ENCODE measurements at regions of chr2 and their contacts with region 1.

Region 1: GRCh38 chr2:12931186-12931844 is 214.6 kb downstream of the TRIB2 start:
- DNase-seq: no peak
- ATAC-seq: peak; percentile 66 to 76
- H3K4me3 ChIP-seq: no peak overlapping the region
- H3K27ac ChIP-seq: no peak overlapping the region
- H3K4me1 ChIP-seq: peaks cover 0 to 4% of the 10 kb centered on the region in 2 donors
- H3K27me3 ChIP-seq: no peaks in the 10 kb centered on the region
- CTCF ChIP-seq: peak; percentile 62 to 88 (median 73)
- POLR2A ChIP-seq: no peak

Region 2: GRCh38 chr2:12897181-12897580 is 34.1 kb before region 1 on chr2:
- in situ Hi-C with region 1: no loop called
- intact Hi-C with region 1: no loop called
- DNase-seq: no peak
- ATAC-seq: no peak
- H3K4me3 ChIP-seq: no peak overlapping the region
- H3K27ac ChIP-seq: peak overlapping the region in 3 of 4 donors; percentile 6 to 30 (median 24)
- H3K4me1 ChIP-seq: no peaks in the 10 kb centered on the region
- H3K27me3 ChIP-seq: no peaks in the 10 kb centered on the region
- CTCF ChIP-seq: no peak
- POLR2A ChIP-seq: no peak

Region 3: DNA sequence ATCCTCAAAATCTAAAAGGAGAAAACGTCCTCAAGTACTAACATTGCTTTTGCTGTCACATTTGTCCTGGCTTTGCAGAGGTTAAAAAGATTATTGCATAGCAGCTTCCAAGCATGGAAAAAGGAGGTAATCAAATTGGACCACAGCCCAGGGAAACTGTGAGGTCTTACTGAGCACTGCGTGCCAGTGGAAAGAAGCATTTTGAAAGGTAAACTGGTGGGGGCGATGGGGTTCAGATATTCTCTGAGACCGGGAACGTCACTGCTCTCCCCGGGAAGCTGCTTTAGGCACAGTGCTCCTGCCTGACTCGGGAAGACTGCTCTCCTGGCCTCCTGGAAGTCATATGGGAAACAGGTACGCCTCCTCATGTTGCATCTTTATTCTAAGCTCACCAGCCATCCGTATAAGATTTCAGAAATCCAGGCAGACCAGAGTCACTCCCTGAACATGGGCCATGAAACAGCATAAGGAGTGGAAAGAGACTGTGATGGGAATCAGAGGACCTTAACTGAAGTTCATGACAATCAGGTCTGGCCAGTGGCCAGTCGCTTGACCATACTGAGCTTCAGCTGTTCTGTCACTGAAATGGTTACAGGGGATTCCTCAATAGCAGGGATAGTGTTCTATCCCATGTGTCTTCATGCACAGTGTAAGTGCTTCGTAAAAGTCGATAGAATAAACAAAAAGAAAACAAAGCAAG is 69.5 kb after region 1 on chr2:
- in situ Hi-C with region 1: no loop called
- intact Hi-C with region 1: loop called (anchors 5 kb)
- DNase-seq: no peak
- ATAC-seq: peak; percentile 19 to 24
- H3K4me3 ChIP-seq: peak overlapping the region in 1 of 4 donors; percentile 25
- H3K27ac ChIP-seq: peak overlapping the region in 1 of 4 donors; percentile 25
- H3K4me1 ChIP-seq: peaks cover 13% of the 10 kb centered on the region in 2 donors
- H3K27me3 ChIP-seq: no peaks in the 10 kb centered on the region
- CTCF ChIP-seq: no peak
- POLR2A ChIP-seq: no peak

Measured in gastrocnemius medialis (tissue), 4 donors.